A549 (cell line): ENCODE measurements at regions of chr19 and their contacts with region 1.

Region 1: GRCh38 chr19:39792999-39793546 is 14.4 kb downstream of the LEUTX start:
- DNase-seq: peak; percentile 88 to 99
- ATAC-seq: peak; percentile 97 to 99
- H3K4me3 ChIP-seq: peak overlapping the region; percentile 40
- H3K27ac ChIP-seq: 0 out of 6 replicates have a peak overlapping the region, but pooled peaks of 1 of the 2 experiments have one; percentile 37
- H3K4me1 ChIP-seq: no peaks in the 10 kb centered on the region
- CTCF ChIP-seq: peak; percentile 100
- EP300 ChIP-seq: no peak
- POLR2A ChIP-seq: no peak
- RAD21 ChIP-seq: peak; percentile 97 to 99

Region 2: DNA sequence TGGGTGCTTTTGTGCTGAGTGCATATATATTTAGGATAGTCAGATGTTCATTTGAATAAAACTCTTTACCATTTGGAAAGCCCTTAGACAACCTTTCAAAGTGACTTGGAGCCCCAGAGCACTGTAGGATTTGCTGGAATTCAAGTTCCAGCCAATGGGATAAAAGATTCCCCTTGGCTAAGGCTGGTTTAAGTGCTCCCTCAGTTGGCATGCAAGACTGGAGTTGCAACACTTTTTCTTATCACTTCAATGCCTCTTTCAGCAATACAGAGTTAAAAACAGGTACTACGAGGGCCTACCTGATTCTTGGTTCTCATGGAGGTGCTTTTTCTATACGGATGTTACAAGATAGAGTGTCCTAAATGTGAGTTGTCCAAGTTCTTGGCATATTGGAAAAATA is 216.6 kb before region 1 on chr19:
- CTCF ChIA-PET with region 1: no interaction called
- POLR2A ChIA-PET with region 1: no interaction called
- DNase-seq: no peak
- ATAC-seq: no peak
- H3K4me3 ChIP-seq: no peak overlapping the region
- H3K27ac ChIP-seq: no peak overlapping the region
- H3K4me1 ChIP-seq: no peaks in the 10 kb centered on the region
- CTCF ChIP-seq: no peak
- EP300 ChIP-seq: no peak
- POLR2A ChIP-seq: no peak
- RAD21 ChIP-seq: no peak

Region 3: GRCh38 chr19:39701291-39701690 is 91.8 kb before region 1 on chr19:
- CTCF ChIA-PET with region 1: no interaction called
- POLR2A ChIA-PET with region 1: no interaction called
- DNase-seq: no peak
- ATAC-seq: no peak
- H3K4me3 ChIP-seq: no peak overlapping the region
- H3K27ac ChIP-seq: no peak overlapping the region
- H3K4me1 ChIP-seq: no peaks in the 10 kb centered on the region; the same call in 2 of the 3 replicates
- CTCF ChIP-seq: no peak
- EP300 ChIP-seq: no peak
- POLR2A ChIP-seq: no peak
- RAD21 ChIP-seq: no peak

Region 4: DNA sequence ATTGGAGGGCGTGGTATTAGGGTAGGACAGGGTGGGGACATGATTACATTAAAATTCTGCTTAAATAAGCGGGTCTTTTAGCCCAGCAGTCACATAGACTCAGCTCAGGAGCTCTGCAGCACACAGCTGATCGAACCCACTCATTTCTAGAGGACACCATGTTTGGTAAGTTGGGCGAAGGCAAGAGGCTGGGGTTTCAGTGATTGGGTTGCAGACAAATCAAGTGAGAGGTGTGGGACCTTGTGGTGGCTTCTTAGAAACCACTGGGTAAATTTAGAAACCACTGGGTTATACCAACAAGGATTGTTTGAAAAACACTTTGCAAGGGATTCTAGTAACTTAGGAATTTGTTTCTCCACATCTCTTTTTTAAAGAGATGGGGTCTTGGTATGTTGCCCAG is 14.3 kb before region 1 on chr19 and contains the start of gene LEUTX:
- CTCF ChIA-PET with region 1: interaction called, 95 read pairs
- POLR2A ChIA-PET with region 1: no interaction called
- DNase-seq: no peak
- ATAC-seq: no peak
- H3K4me3 ChIP-seq: no peak within 1 kb of the TSS
- H3K27ac ChIP-seq: no peak within 1 kb of the TSS
- H3K4me1 ChIP-seq: no peaks in the 10 kb centered on the region
- CTCF ChIP-seq: no peak
- EP300 ChIP-seq: no peak
- POLR2A ChIP-seq: no peak
- RAD21 ChIP-seq: no peak
- polyA plus RNA-seq, gene LEUTX: not detected in 2 replicates

Region 5: DNA sequence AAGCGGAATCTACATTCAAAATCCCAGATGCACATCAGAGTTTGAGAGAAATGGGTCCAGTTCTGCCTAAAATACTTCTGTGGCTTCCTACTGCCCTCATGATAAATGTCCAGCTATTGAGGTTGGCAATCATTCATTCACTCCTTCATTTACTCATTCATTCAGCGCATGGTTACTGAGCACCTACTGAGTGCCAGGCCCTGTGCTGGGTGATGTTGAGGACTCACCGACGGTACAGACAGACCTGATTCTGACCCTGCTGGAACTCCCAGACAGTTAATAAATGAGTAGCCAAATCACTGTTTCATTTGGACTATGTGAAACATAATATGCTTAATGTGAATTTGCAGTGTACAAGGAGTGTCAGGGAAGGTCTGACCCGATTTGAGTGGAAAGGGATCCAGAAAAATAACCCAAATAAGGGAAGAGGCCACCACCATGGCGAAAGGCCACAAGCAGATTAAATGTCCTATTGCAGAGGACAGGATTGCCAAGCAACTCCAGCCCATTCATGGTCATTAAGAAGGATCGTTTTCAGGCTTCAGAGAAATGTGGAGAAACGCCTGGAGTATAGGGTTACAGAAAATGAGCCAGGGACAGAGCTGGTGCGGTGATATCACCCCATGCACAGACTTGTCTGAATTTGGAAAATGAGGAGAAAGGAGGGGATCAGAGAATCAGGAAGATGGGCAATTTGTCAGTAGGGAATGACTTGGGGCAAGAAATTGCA is 20.4 kb after region 1 on chr19:
- CTCF ChIA-PET with region 1: interaction called, 23 read pairs
- POLR2A ChIA-PET with region 1: no interaction called
- DNase-seq: no peak
- ATAC-seq: no peak
- H3K4me3 ChIP-seq: no peak overlapping the region
- H3K27ac ChIP-seq: no peak overlapping the region
- H3K4me1 ChIP-seq: no peaks in the 10 kb centered on the region
- CTCF ChIP-seq: no peak
- EP300 ChIP-seq: no peak
- POLR2A ChIP-seq: no peak
- RAD21 ChIP-seq: no peak

Region 6: GRCh38 chr19:39824143-39825092 is 31.3 kb after region 1 on chr19:
- CTCF ChIA-PET with region 1: interaction called, 25 read pairs
- POLR2A ChIA-PET with region 1: no interaction called
- DNase-seq: no peak
- ATAC-seq: peak in 1 of 2 experiments; percentile 21; a peak in 3 of 6 replicates
- H3K4me3 ChIP-seq: no peak overlapping the region
- H3K27ac ChIP-seq: no peak overlapping the region
- H3K4me1 ChIP-seq: no peaks in the 10 kb centered on the region
- CTCF ChIP-seq: no peak
- EP300 ChIP-seq: no peak
- POLR2A ChIP-seq: no peak
- RAD21 ChIP-seq: no peak